Naive thymus-derived CD4-positive, alpha-beta T cell (primary cell): ENCODE measurements at regions of chr4 and their contacts with region 1.

Region 1: DNA sequence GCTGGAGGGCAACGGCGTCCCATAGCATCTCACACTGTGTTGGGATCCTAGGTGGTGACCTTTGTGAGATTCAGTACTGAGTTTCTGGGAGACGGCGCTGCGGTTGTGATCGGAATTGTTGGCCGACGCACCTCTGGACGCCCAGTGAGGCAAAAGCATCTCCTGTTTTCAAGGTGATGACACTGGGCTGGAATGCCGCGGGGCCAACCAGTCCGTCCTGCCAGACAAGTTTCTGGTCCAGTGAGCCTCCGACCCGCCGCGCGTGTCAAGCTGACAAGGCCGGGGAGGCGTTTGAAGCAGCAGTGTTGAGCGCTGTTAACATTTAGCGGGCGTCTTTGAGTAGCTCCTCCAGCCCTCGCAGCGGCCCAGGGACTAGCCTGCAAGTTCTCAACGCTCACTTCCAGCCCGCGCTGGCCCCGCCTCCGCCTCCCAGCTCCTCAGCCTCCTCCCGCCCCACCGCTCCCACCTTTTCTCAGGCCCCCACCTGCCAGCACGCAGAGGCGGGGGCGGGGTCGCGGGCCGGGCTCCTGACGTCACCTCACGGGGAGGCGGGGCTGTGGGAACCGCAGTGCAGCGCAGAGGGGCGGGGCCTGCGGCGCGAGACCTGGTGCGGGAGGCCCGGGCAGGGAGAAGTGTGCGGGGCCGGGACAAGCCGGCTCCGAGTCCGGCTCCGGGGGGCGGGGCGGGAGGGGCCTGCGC is 476 bp upstream of the CDS1 start:
- DNase-seq: peak; percentile 88 to 96 (median 91)
- ATAC-seq: peak; percentile 93
- H3K4me3 ChIP-seq: peak overlapping the region; percentile 61
- H3K4me3 Mint-ChIP-seq: peak overlapping the region; percentile 67 to 90 (median 85)
- H3K27ac ChIP-seq: peak overlapping the region; percentile 62
- H3K27ac Mint-ChIP-seq: peak overlapping the region in 6 of 9 donors; percentile 38 to 83 (median 50)
- H3K4me1 ChIP-seq: peaks cover 5% of the 10 kb centered on the region in 2 donors
- H3K4me1 Mint-ChIP-seq: peaks cover 9 to 26% (median 17%) of the 10 kb centered on the region in 7 donors
- H3K27me3 ChIP-seq: no peaks in the 10 kb centered on the region
- H3K27me3 Mint-ChIP-seq: peaks cover 18 to 61% (median 36%) of the 10 kb centered on the region in 5 donors

Region 2: GRCh38 chr4:83334425-83335241 is 1247.8 kb before region 1 on chr4 and contains the start of gene HPSE:
- CTCF ChIA-PET with region 1: no interaction called
- POLR2A ChIA-PET with region 1: no interaction called
- intact Hi-C with region 1: loop called in 1 of 2 experiments (anchors 10 kb)
- DNase-seq: peak; percentile 48 to 73 (median 69)
- ATAC-seq: peak; percentile 94
- H3K4me3 ChIP-seq: peak within 1 kb of the TSS; percentile 80
- H3K4me3 Mint-ChIP-seq: peak within 1 kb of the TSS; percentile 85 to 97 (median 92)
- H3K27ac ChIP-seq: peak within 1 kb of the TSS; percentile 70
- H3K27ac Mint-ChIP-seq: peak within 1 kb of the TSS; percentile 72 to 95 (median 87)
- H3K4me1 ChIP-seq: peaks cover 11% of the 10 kb centered on the region in 2 donors
- H3K4me1 Mint-ChIP-seq: peaks cover 16 to 47% (median 33%) of the 10 kb centered on the region in 7 donors
- H3K27me3 ChIP-seq: no peaks in the 10 kb centered on the region
- H3K27me3 Mint-ChIP-seq: peaks cover 0 to 26% (median 0%) of the 10 kb centered on the region in 5 donors
- total RNA-seq, gene HPSE: 4.4 to 16.2 (median 6.6) TPM

Region 3: GRCh38 chr4:83535520-83536361 is 1046.7 kb before region 1 on chr4 and contains the start of gene GPAT3:
- CTCF ChIA-PET with region 1: no interaction called
- POLR2A ChIA-PET with region 1: no interaction called
- intact Hi-C with region 1: loop called in 1 of 2 experiments (anchors 2 kb)
- DNase-seq: peak; percentile 37 to 76 (median 58)
- ATAC-seq: peak; percentile 89
- H3K4me3 ChIP-seq: peak within 1 kb of the TSS; percentile 80
- H3K4me3 Mint-ChIP-seq: peak within 1 kb of the TSS; percentile 87 to 97 (median 90)
- H3K27ac ChIP-seq: peak within 1 kb of the TSS; percentile 56
- H3K27ac Mint-ChIP-seq: peak within 1 kb of the TSS; percentile 24 to 92 (median 73)
- H3K4me1 ChIP-seq: peaks cover 0 to 8% of the 10 kb centered on the region in 2 donors
- H3K4me1 Mint-ChIP-seq: peaks cover 13 to 37% (median 17%) of the 10 kb centered on the region in 7 donors
- H3K27me3 ChIP-seq: no peaks in the 10 kb centered on the region
- H3K27me3 Mint-ChIP-seq: peaks cover 0 to 59% (median 20%) of the 10 kb centered on the region in 5 donors
- total RNA-seq, gene GPAT3: 3.0 to 14.6 (median 5.8) TPM

Region 4: DNA sequence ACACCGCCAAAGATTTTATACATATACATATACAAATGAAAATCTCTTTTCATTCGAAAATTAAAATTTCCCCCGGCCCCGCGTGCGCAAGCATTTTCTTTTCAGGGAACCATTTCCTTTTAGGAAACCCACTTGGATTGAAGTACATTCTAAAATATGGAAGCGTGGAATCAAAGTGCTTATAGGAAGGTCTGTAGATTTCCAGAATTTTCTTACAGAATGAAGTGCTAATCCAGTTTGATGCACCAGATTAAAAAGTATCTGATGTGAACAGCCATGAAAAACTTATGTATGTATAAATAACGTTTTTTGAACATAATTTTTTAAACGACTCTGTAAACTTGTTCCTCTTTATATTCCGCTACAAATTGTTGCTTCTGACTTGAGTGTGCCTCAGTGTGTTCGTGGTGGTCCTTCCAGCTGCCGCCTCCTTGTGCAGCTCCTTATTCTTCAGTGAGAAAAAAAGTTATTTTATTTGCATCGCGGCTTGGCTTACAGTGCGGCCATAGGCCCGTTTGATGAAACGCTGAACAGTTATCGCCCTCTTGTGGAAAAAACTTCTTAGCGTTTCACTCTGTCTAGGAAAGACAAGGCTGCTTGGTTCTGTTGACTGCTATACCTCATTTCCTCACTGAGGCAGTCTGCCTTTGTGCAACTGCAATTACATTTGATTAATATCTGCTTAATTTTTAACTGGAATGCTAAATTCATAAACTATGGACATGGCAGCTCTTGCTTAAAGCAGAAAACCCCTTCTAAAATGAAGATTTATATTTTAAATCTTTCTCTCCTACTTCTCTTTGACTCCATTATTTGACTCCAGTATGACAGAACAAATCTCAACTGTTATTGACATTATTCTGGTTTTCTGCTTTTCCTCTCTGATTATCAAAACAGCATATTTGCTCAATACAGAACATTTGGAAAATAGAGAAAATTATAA is 78.7 kb before region 1 on chr4:
- CTCF ChIA-PET with region 1: no interaction called
- POLR2A ChIA-PET with region 1: no interaction called
- intact Hi-C with region 1: loop called (anchors 1 to 5 kb)
- DNase-seq: peak in 1 of 9 donors; percentile 31
- ATAC-seq: peak; percentile 69
- H3K4me3 ChIP-seq: no peak overlapping the region
- H3K4me3 Mint-ChIP-seq: peak overlapping the region in 2 of 10 donors; percentile 35 to 48
- H3K27ac ChIP-seq: no peak overlapping the region
- H3K27ac Mint-ChIP-seq: peak overlapping the region in 2 of 9 donors; percentile 39 to 78
- H3K4me1 ChIP-seq: peaks cover 0 to under 1% of the 10 kb centered on the region in 2 donors
- H3K4me1 Mint-ChIP-seq: peaks cover 0 to 18% (median 17%) of the 10 kb centered on the region in 7 donors
- H3K27me3 ChIP-seq: peaks cover 10 to 48% of the 10 kb centered on the region in 2 donors
- H3K27me3 Mint-ChIP-seq: peaks cover 76 to 85% (median 84%) of the 10 kb centered on the region in 5 donors

Region 5: DNA sequence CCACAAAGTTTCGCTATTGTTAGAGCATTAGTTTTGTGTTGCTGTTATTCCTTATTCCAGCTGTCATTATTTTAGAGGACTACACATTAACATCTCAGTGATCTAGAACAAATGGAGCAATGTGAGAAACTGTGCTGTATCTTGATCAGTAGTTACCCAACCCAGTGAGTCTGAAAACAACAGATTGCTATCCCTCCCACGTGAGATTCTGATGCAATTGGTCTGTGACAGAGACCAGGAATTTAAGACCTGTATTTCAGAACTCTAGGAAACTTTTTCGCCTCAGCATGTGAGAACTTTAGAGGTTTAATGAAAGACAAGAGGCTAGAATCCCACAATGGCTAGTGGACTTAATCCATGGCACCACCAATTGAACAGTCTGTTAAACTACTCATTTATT is 35.2 kb before region 1 on chr4:
- CTCF ChIA-PET with region 1: no interaction called
- POLR2A ChIA-PET with region 1: no interaction called
- intact Hi-C with region 1: loop called in 1 of 2 experiments (anchors 1 kb)
- DNase-seq: no peak
- ATAC-seq: no peak
- H3K4me3 ChIP-seq: no peak overlapping the region
- H3K4me3 Mint-ChIP-seq: no peak overlapping the region
- H3K27ac ChIP-seq: no peak overlapping the region
- H3K27ac Mint-ChIP-seq: no peak overlapping the region
- H3K4me1 ChIP-seq: no peaks in the 10 kb centered on the region
- H3K4me1 Mint-ChIP-seq: no peaks in the 10 kb centered on the region
- H3K27me3 ChIP-seq: no peaks in the 10 kb centered on the region
- H3K27me3 Mint-ChIP-seq: peaks cover 0 to 32% (median 12%) of the 10 kb centered on the region in 5 donors

Region 6: DNA sequence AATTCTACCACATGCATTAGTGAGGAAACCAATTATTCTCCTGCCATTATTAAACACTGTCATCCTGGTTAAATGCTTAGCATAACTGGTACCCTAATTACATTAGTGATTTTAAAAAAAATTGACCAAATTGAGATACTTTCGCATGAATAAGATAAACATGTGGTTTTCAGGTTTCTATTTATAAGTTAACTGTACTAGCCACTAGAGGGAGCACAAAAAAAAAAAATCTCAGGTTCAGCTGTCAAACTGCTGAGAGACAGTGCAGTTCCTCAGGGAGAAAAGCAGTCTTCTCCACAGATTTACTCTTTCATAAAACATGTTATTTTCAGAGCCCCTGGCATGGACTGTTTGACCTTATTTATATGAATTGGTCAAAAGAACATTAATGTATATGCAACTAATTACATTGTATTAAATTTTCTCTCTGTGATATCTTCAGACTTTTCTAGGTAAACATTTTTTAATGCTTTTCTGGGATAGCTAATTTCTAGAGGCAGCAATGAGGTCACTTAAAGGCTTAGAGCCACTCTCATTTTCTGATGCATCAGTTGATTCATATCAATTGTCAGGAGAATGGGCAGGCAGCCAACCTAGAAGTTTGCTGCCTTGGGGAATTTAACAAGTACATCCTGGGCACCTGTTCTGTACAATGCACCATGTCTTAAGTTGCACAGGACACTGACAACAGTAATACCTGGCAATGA is 168.0 kb after region 1 on chr4:
- CTCF ChIA-PET with region 1: interaction called, 5 read pairs
- POLR2A ChIA-PET with region 1: no interaction called
- intact Hi-C with region 1: loop called in 1 of 2 experiments (anchors 1 kb)
- DNase-seq: peak in 2 of 9 donors; percentile 3 to 8
- ATAC-seq: no peak
- H3K4me3 ChIP-seq: no peak overlapping the region
- H3K4me3 Mint-ChIP-seq: no peak overlapping the region
- H3K27ac ChIP-seq: no peak overlapping the region
- H3K27ac Mint-ChIP-seq: no peak overlapping the region
- H3K4me1 ChIP-seq: no peaks in the 10 kb centered on the region
- H3K4me1 Mint-ChIP-seq: no peaks in the 10 kb centered on the region
- H3K27me3 ChIP-seq: no peaks in the 10 kb centered on the region
- H3K27me3 Mint-ChIP-seq: peaks cover 0 to 10% (median 0%) of the 10 kb centered on the region in 5 donors

Region 7: DNA sequence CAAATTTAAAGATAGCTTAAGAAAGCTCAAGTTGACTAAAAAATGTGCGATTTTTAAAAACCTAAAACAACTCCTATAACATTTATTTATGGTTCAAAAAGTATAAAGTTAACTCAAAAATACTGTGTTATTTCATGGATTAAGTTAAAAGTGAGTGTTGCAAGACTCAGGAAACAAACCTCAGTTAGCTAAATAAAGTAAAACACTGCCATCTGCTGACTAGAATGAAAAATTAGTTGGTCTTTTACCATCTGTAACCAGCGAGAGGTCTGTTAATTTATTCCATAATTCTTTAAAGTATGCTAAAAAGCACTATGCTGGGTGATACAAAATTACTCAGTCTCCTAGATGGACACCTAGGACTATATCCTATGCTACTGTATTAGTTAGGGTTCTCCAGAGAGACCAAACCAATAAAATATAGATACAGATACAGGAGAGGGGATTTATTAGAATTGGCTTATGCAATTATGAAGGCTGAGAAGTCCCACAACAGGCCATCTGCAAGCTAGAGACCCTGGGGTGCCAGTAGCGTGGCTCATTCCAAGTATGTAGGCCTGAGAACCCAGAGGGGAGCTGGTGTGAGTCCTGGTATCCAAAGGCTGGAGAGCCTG is 389.0 kb after region 1 on chr4:
- CTCF ChIA-PET with region 1: interaction called, 7 read pairs
- POLR2A ChIA-PET with region 1: no interaction called
- intact Hi-C with region 1: loop called in 1 of 2 experiments (anchors 5 kb)
- DNase-seq: no peak
- ATAC-seq: no peak
- H3K4me3 ChIP-seq: no peak overlapping the region
- H3K4me3 Mint-ChIP-seq: no peak overlapping the region
- H3K27ac ChIP-seq: no peak overlapping the region
- H3K27ac Mint-ChIP-seq: no peak overlapping the region
- H3K4me1 ChIP-seq: no peaks in the 10 kb centered on the region
- H3K4me1 Mint-ChIP-seq: peaks cover 7 to 10% (median 10%) of the 10 kb centered on the region in 7 donors
- H3K27me3 ChIP-seq: no peaks in the 10 kb centered on the region
- H3K27me3 Mint-ChIP-seq: peaks cover 27 to 44% (median 35%) of the 10 kb centered on the region in 5 donors